Endothelial cell of umbilical vein (primary cell): ENCODE measurements at regions of chr1 and their contacts with region 1.

Region 1: GRCh38 chr1:31715087-31715872 is 11.5 kb upstream of the COL16A1 start:
- DNase-seq: peak; percentile 92
- H3K4me3 ChIP-seq: peak overlapping the region in 2 of 3 experiments; percentile 9 to 27
- H3K27ac ChIP-seq: peak overlapping the region; percentile 62
- H3K4me1 ChIP-seq: peaks cover 24% of the 10 kb centered on the region
- H3K27me3 ChIP-seq: peaks cover 0 to 18% of the 10 kb centered on the region in 2 experiments
- CTCF ChIP-seq: peak; percentile 86 to 96
- POLR2A ChIP-seq: no peak

Region 2: GRCh38 chr1:31576201-31576669 is 139.0 kb before region 1 on chr1 and contains the start of gene TINAGL1:
- CTCF ChIA-PET with region 1: interaction called, 3 read pairs
- POLR2A ChIA-PET with region 1: no interaction called
- dilution Hi-C with region 1: no loop called
- intact Hi-C with region 1: loop called (anchors 5 kb)
- DNase-seq: peak; percentile 48
- H3K4me3 ChIP-seq: peak within 1 kb of the TSS; percentile 76 to 90 (median 87)
- H3K27ac ChIP-seq: peak within 1 kb of the TSS; percentile 88
- H3K4me1 ChIP-seq: peaks cover 61% of the 10 kb centered on the region
- H3K27me3 ChIP-seq: no peaks in the 10 kb centered on the region
- CTCF ChIP-seq: no peak
- POLR2A ChIP-seq: peak; percentile 71
- total RNA-seq, gene TINAGL1: 298 and 312 TPM in 2 replicates

Region 3: DNA sequence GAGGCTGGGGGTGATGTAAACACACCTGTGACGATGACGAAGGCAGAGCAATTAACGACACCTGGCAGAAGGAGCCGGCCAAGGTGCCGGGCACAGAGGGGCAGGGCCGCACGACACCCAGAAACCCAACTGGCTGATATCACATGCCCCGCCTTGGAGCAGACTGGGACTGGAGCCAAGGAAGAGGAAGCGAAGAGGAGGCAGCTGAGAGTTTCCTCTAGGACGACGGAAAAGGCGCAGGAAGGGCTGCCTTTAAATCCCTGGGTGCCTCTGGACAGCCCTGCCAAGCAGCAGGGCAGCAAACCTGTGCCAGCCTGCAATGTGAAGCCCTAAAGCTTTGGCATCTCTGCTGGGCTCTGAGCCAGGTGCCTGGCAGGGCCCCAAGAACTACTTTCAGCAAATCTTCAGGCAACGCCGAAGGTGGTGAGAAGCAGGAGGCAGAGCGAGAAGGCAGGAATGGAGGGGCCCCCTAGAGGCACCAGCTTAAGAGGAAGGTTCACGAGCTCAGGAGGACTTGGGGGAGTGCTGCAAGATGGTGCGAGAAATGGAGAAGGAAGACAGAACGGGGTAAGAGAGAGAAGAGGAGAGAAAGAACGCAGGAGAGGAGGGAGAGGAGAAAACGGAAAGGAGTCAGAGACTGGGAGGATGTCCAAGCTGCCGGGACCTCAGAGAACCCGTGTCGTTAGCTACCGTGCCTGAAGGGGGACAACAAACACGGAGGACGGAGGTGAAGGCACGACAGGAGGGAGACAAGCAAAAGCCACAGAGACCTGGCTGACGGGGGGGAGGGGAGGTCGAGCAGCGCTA is 45.3 kb before region 1 on chr1:
- CTCF ChIA-PET with region 1: interaction called, 180 read pairs
- POLR2A ChIA-PET with region 1: no interaction called
- dilution Hi-C with region 1: no loop called
- intact Hi-C with region 1: loop called (anchors 1 kb)
- DNase-seq: peak; percentile 77
- H3K4me3 ChIP-seq: peak overlapping the region; percentile 7 to 31 (median 21)
- H3K27ac ChIP-seq: no peak overlapping the region
- H3K4me1 ChIP-seq: peaks cover 13% of the 10 kb centered on the region
- H3K27me3 ChIP-seq: no peaks in the 10 kb centered on the region
- CTCF ChIP-seq: peak; percentile 10 to 29
- POLR2A ChIP-seq: no peak

Region 4: GRCh38 chr1:31705080-31705866 is 10.0 kb before region 1 on chr1:
- CTCF ChIA-PET with region 1: interaction called, 29 read pairs
- POLR2A ChIA-PET with region 1: interaction called, 3 read pairs
- dilution Hi-C with region 1: no loop called
- intact Hi-C with region 1: no loop called
- DNase-seq: no peak
- H3K4me3 ChIP-seq: no peak overlapping the region
- H3K27ac ChIP-seq: no peak overlapping the region
- H3K4me1 ChIP-seq: peaks cover 9% of the 10 kb centered on the region
- H3K27me3 ChIP-seq: peaks cover 0 to 3% of the 10 kb centered on the region in 2 experiments
- CTCF ChIP-seq: peak; percentile 5 to 12
- POLR2A ChIP-seq: no peak

Region 5: GRCh38 chr1:31762726-31763670 is 47.7 kb after region 1 on chr1:
- CTCF ChIA-PET with region 1: interaction called, 4 read pairs
- POLR2A ChIA-PET with region 1: no interaction called
- dilution Hi-C with region 1: no loop called
- intact Hi-C with region 1: loop called (anchors 2 kb)
- DNase-seq: peak; percentile 63
- H3K4me3 ChIP-seq: peak overlapping the region; percentile 40 to 42 (median 42)
- H3K27ac ChIP-seq: no peak overlapping the region
- H3K4me1 ChIP-seq: peaks cover 26% of the 10 kb centered on the region
- H3K27me3 ChIP-seq: peaks cover 3 to 4% of the 10 kb centered on the region in 2 experiments
- CTCF ChIP-seq: peak; percentile 55 to 78
- POLR2A ChIP-seq: no peak

Region 6: GRCh38 chr1:32031578-32032274 is 316.4 kb after region 1 on chr1:
- CTCF ChIA-PET with region 1: no interaction called
- POLR2A ChIA-PET with region 1: no interaction called
- dilution Hi-C with region 1: no loop called
- intact Hi-C with region 1: no loop called
- DNase-seq: peak; percentile 49
- H3K4me3 ChIP-seq: no peak overlapping the region
- H3K27ac ChIP-seq: peak overlapping the region; percentile 31
- H3K4me1 ChIP-seq: peaks cover 16% of the 10 kb centered on the region
- H3K27me3 ChIP-seq: no peaks in the 10 kb centered on the region
- CTCF ChIP-seq: no peak
- POLR2A ChIP-seq: no peak